OCI-LY7 (cell line): ENCODE measurements at regions of chr11 and their contacts with region 1.

Region 1: DNA sequence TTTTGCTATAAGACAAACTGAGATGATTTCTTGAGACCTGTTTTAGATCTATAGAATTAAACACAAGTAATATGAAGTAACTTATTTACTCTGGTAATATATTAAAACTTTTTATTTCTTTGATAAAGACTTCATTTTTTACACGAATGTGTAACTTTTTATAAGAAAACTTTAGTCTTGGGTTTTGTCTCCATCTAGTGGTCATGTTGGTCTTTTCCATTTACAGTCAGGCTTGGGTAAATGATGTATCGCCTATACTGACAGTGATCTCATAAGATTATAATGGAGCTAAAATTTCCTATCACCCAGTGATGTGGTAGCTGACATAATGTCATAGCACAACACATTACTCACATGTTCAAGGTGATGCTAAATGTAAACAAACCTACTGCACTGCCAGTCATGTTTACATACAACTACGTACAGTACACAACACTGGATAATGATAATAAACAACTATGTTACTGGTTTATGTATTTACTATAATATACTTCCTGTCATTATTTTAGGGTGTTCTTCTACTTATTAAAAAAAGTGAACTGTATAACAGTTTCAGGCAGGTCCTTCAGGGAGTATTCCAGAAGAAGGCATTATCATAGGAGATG is 7.5 kb upstream of the C11orf97 start:
- DNase-seq: peak; percentile 64
- H3K4me3 ChIP-seq: no peak overlapping the region
- H3K27ac ChIP-seq: no peak overlapping the region
- H3K4me1 ChIP-seq: no peaks in the 10 kb centered on the region
- CTCF ChIP-seq: peak; percentile 92

Region 2: DNA sequence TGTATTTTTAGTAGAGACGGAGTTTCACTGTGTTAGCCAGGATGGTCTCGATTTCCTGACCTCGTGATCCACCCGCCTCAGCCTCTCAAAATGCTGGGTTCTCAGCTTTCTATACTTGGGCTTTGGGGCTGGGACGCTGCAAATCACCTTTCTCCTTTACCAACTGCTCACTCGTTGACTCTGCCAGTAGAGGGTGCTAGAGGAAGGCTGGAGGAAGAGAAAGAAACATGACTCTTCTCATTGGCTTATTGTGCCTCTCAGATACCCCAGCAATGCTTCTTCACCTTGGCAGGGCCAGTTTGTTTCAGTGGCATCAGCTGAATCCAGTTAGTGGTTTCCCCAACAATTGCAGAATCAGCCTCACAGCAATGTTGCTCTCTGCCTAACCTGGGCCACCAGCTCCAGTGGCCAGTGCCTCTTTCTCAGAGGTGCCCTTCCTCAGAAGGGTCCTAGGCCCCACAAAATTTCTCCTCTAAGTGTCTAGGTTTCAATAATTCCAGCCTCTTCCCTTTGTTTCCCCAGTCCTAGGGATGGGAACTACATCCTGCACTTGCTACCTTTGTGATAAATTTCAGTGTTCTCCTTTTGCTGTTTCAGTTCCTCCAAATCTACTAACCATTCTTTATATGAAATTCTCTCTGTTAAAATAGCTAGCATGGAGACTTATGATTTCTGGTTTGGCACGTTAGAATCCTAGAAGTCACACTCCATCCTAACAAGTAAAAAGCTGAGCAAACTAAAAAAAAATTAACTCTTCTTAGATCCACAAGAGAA is 582.9 kb before region 1 on chr11:
- CTCF ChIA-PET with region 1: no interaction called
- POLR2A ChIA-PET with region 1: no interaction called
- intact Hi-C with region 1: loop called (anchors 10 kb)
- DNase-seq: peak; percentile 30
- H3K4me3 ChIP-seq: no peak overlapping the region
- H3K27ac ChIP-seq: no peak overlapping the region
- H3K4me1 ChIP-seq: no peaks in the 10 kb centered on the region
- CTCF ChIP-seq: peak; percentile 72

Region 3: GRCh38 chr11:94183886-94184264 is 320.9 kb before region 1 on chr11:
- CTCF ChIA-PET with region 1: no interaction called
- POLR2A ChIA-PET with region 1: no interaction called
- intact Hi-C with region 1: loop called (anchors 1 kb)
- DNase-seq: peak; percentile 50
- H3K4me3 ChIP-seq: no peak overlapping the region
- H3K27ac ChIP-seq: no peak overlapping the region
- H3K4me1 ChIP-seq: no peaks in the 10 kb centered on the region
- CTCF ChIP-seq: peak; percentile 84

Region 4: DNA sequence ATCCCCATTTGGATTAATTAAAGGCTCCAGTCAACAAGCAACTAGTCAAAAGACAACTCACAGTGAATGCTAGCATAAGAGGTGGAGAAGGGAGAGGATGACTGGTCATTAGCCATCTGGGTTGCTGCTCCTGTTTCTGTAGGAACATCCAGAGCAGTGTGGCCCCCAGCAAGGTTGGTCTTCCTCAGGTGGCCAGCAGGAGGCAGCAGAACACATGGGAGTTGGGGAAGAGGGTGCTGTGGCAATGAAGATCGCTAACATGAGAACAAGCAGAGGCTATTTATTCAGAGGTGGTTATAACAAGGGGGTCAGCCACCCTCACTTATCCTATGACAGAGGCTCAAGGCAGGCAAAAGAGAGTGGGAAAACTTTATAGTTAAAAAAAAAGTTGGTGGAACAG is 179.1 kb before region 1 on chr11:
- CTCF ChIA-PET with region 1: no interaction called
- POLR2A ChIA-PET with region 1: interaction called, 4 read pairs
- intact Hi-C with region 1: loop called (anchors 2 kb)
- DNase-seq: peak; percentile 37
- H3K4me3 ChIP-seq: no peak overlapping the region
- H3K27ac ChIP-seq: no peak overlapping the region
- H3K4me1 ChIP-seq: no peaks in the 10 kb centered on the region
- CTCF ChIP-seq: peak; percentile 76